ENCODE measurements at regions of chr4 and their contacts with region 1.

Region 1: DNA sequence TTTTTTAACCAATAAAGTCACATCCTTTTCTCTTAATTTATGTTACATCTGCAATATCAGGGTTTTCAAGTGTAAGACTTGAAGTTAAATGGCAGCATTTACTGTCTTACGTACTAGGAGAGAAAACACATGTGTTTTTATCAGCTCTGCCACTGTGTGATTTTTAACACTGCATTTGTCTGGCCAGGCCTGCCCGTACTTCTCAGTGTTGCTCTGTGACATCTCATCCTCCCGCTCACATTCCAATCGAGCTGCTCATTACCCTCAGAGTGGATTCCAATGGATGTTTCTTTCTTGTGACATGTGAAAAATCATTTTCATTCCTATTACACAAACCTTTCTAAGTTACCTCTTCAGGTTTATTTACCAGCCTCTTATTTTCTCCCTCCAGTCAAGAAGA is 420.3 kb downstream of the FAT4 start:
- DNase-seq: no peak
- ATAC-seq: no peak
- H3K4me3 ChIP-seq: no peak overlapping the region
- H3K27ac ChIP-seq: no peak overlapping the region
- H3K4me1 ChIP-seq: no peaks in the 10 kb centered on the region
- H3K27me3 ChIP-seq: no peaks in the 10 kb centered on the region
- CTCF ChIP-seq: no peak
- EP300 ChIP-seq: no peak
- POLR2A ChIP-seq: no peak
- RAD21 ChIP-seq: no peak

Region 2: DNA sequence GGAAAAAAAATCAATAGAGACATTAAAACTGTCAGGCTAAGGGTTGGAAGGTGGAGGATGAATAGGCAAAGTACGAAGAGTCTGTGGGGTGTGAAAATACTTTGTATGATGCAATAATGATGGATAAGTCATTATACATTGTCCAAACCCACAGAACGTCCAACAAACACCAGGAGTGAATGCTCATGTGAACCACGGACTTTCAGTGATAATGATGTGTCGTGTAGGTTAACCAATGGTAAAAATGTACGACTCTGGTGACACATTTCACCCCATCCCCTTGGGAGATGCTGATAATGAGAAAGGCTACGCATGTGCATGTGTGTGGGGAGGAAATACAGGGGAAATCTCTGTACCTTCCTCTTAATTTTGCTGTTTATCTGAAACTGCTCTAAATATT is 244.8 kb after region 1 on chr4:
- CTCF ChIA-PET with region 1: interaction called, 17 read pairs
- POLR2A ChIA-PET with region 1: no interaction called
- RAD21 ChIA-PET with region 1: interaction called, 4 read pairs
- SMC1A ChIA-PET with region 1: interaction called, 5 read pairs
- in situ Hi-C with region 1: no loop called
- intact Hi-C with region 1: no loop called
- DNase-seq: no peak
- ATAC-seq: peak; percentile 84
- H3K4me3 ChIP-seq: no peak overlapping the region
- H3K27ac ChIP-seq: no peak overlapping the region
- H3K4me1 ChIP-seq: no peaks in the 10 kb centered on the region
- H3K27me3 ChIP-seq: no peaks in the 10 kb centered on the region
- CTCF ChIP-seq: no peak
- EP300 ChIP-seq: no peak
- POLR2A ChIP-seq: no peak
- RAD21 ChIP-seq: no peak

Measured in GM12878 (cell line).